Ascending aorta (tissue), 2 donors: ENCODE measurements at regions of chr3 and their contacts with region 1.

Region 1: DNA sequence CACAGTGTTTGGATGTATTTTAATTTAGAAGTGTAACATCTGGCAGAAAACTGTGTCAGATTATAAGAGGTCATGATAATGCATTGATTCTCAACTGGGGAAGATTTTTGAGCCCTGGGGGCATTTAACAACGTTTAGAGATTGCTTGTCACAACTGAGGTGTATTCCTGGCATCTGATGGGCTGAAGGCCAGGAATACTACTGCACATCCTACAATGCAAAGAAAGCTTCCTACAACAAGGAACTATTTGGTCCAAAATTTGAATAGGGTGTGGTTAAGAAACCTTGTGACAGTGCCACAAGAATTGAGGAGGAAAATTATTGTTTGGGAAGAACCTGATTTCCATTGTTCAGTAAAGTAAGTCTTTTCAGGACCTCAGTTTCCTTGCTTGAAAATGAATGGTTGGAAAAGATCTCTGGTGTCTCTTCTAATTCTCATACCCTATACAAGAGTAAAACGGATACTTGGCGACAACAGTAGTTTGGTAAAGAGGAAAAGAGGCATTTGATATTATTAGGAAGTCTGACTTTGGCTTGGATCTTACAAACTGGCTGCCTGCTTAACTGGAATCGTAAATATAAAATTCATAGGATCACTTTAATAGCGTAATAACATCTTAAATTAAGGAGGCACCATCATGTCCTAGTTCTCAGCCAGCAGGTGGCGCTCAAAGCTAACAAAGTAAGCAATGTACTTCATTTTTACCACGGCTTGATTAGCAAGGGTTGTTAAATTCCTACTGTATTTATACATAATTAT is 4.3 kb downstream of the DAZL start:
- DNase-seq: peak in 1 of 2 donors; percentile 89
- H3K4me3 ChIP-seq: no peak overlapping the region
- H3K27ac ChIP-seq: no peak overlapping the region
- H3K4me1 ChIP-seq: no peaks in the 10 kb centered on the region
- H3K27me3 ChIP-seq: no peaks in the 10 kb centered on the region
- CTCF ChIP-seq: peak; percentile 61 to 88 (median 74)

Region 2: DNA sequence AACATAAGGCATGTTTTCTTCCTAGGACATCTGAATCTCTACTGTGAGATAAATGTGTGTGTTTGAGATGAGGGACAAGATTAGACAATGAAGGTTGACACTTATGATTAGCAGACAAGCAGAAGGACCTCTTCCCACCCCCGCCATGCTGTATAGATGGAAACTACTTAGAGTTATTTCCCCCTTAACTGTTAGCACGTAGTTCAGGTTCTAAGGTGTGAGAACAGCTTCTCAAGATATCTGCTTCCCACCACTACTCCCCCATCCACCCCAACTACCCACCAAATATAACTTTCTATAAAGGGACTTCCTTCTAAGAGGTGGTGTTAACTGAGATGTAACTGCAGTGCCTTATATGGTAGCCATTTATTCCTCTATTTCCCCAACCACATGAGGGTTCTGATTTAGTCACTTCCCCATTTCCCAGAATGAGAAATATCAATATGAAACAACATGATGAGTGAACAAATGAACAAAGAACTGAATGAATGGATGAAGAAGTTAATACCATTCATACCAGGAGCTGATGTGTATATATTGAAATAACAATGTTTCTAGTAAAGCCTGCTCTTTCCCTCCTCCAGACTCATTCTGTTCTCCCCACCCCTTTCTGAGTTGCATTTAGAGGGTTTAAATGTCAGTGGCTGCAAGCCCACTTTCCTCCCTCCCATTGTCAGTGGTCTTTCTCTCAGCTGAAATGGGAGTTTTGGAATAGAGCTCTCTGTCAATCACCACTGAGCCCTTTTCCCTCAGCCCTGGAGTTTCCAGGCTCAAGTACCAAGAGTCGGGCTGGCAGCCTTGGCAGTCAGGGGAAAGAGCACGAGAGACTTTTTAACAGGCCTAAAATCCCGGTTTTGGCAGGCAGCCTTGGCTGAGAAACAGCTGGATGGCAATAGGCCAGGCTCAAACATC is 79.7 kb before region 1 on chr3:
- intact Hi-C with region 1: no loop called
- DNase-seq: no peak
- H3K4me3 ChIP-seq: no peak overlapping the region
- H3K27ac ChIP-seq: no peak overlapping the region
- H3K4me1 ChIP-seq: peaks cover 0 to 7% of the 10 kb centered on the region in 2 donors
- H3K27me3 ChIP-seq: no peaks in the 10 kb centered on the region
- CTCF ChIP-seq: no peak

Region 3: DNA sequence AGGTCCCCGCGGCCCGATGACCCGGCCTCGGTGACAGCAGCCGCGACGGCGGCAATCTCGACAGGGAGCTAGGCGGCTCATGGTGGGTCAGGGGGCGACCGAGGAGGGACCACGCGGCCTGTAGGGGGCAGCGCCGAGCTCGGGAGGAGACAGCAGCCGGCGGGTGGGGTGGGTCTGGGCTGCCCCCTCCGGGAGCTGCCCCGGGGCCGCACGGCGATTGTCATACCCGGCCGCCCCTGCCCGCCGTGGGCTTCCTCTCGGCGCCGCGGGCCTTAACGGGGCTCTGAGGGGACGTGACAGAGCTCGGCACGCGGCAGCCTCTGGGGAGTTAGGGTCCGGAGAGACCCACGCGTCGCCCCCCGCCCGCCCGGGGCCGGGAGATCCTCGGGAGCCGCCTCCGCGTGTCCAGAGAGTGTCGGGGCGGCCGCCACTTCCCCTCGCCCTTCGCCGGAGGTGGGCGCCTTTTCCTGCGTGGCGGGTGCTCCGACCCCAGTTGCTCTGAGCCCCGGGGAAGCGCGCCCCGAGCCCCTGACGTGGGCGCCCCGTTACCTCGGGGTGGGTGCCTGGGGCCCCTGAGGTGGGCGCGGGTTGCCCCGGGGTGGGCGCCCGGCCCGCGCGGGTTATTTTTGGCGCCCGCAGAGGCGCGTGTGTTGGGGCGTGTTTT is 283.3 kb after region 1 on chr3:
- intact Hi-C with region 1: loop called (anchors 10 kb)
- DNase-seq: peak in 1 of 2 donors; percentile 75
- H3K4me3 ChIP-seq: peak overlapping the region; percentile 84 to 95
- H3K27ac ChIP-seq: peak overlapping the region; percentile 86 to 90
- H3K4me1 ChIP-seq: peaks cover 0 to 17% of the 10 kb centered on the region in 2 donors
- H3K27me3 ChIP-seq: no peaks in the 10 kb centered on the region
- CTCF ChIP-seq: peak in 2 of 3 experiments; percentile 54 to 69

Region 4: DNA sequence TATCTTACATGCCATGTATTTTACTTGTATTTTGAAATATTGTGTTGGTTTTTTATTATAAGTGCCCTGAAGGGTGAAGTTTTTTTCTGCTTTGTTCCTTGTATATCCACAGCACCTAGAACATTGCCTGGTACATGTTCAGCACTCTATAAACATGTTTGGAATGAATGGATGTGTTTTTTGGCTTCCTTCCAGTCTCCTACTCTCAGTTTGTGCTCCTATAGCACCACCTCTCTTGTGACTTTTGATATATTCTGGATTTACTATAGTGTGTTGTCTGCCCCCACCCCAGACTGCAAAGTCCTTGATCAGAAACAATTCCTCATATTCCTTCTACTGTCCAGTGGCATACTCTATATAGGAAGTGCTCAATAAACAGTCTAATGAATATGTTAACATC is 344.4 kb after region 1 on chr3:
- intact Hi-C with region 1: loop called (anchors 10 kb)
- DNase-seq: no peak
- H3K4me3 ChIP-seq: no peak overlapping the region
- H3K27ac ChIP-seq: no peak overlapping the region
- H3K4me1 ChIP-seq: no peaks in the 10 kb centered on the region
- H3K27me3 ChIP-seq: no peaks in the 10 kb centered on the region
- CTCF ChIP-seq: no peak

Region 5: GRCh38 chr3:17032407-17033034 is 431.6 kb after region 1 on chr3:
- intact Hi-C with region 1: loop called (anchors 2 kb)
- DNase-seq: no peak
- H3K4me3 ChIP-seq: no peak overlapping the region
- H3K27ac ChIP-seq: no peak overlapping the region
- H3K4me1 ChIP-seq: no peaks in the 10 kb centered on the region
- H3K27me3 ChIP-seq: no peaks in the 10 kb centered on the region
- CTCF ChIP-seq: peak; percentile 53 to 80 (median 58)

Region 6: GRCh38 chr3:17233398-17233800 is 632.4 kb after region 1 on chr3:
- intact Hi-C with region 1: loop called (anchors 1 kb)
- DNase-seq: no peak
- H3K4me3 ChIP-seq: no peak overlapping the region
- H3K27ac ChIP-seq: no peak overlapping the region
- H3K4me1 ChIP-seq: peaks cover 0 to 3% of the 10 kb centered on the region in 2 donors
- H3K27me3 ChIP-seq: no peaks in the 10 kb centered on the region
- CTCF ChIP-seq: peak; percentile 54 to 79 (median 70)

Region 7: GRCh38 chr3:17412950-17413530 is 812.1 kb after region 1 on chr3:
- intact Hi-C with region 1: loop called (anchors 2 kb)
- DNase-seq: no peak
- H3K4me3 ChIP-seq: no peak overlapping the region
- H3K27ac ChIP-seq: no peak overlapping the region
- H3K4me1 ChIP-seq: no peaks in the 10 kb centered on the region
- H3K27me3 ChIP-seq: no peaks in the 10 kb centered on the region
- CTCF ChIP-seq: peak; percentile 46 to 74 (median 51)

Region 8: GRCh38 chr3:17841190-17841828 is 1240.3 kb after region 1 on chr3:
- intact Hi-C with region 1: loop called (anchors 10 kb)
- DNase-seq: peak in 1 of 2 donors; percentile 78
- H3K4me3 ChIP-seq: no peak overlapping the region
- H3K27ac ChIP-seq: no peak overlapping the region
- H3K4me1 ChIP-seq: no peaks in the 10 kb centered on the region
- H3K27me3 ChIP-seq: no peaks in the 10 kb centered on the region
- CTCF ChIP-seq: peak; percentile 83 to 97 (median 92)